ENCODE measurements at regions of chr18 and their contacts with region 1.

Region 1: GRCh38 chr18:27121108-27121507 is 64.0 kb downstream of the CHST9 start:
- DNase-seq: no peak
- H3K4me3 Mint-ChIP-seq: no peak overlapping the region
- H3K27ac Mint-ChIP-seq: peak overlapping the region; percentile 86
- H3K4me1 Mint-ChIP-seq: peaks cover 54% of the 10 kb centered on the region
- H3K27me3 Mint-ChIP-seq: no peaks in the 10 kb centered on the region
- CTCF ChIP-seq: no peak

Region 2: GRCh38 chr18:27136208-27136535 is 15.1 kb after region 1 on chr18:
- CTCF ChIA-PET with region 1: no interaction called
- intact Hi-C with region 1: loop called (anchors 2 kb)
- DNase-seq: peak; percentile 86
- H3K4me3 Mint-ChIP-seq: peak overlapping the region; percentile 37
- H3K27ac Mint-ChIP-seq: peak overlapping the region; percentile 68
- H3K4me1 Mint-ChIP-seq: peaks cover 56% of the 10 kb centered on the region
- H3K27me3 Mint-ChIP-seq: no peaks in the 10 kb centered on the region
- CTCF ChIP-seq: no peak

Measured in Calu3 (cell line).